ENCODE measurements at regions of chr2 and their contacts with region 1.

Region 1: GRCh38 chr2:134207564-134208209 is 46.2 kb upstream of the MGAT5 start:
- DNase-seq: no peak
- H3K4me3 ChIP-seq: no peak overlapping the region
- CTCF ChIP-seq: peak; percentile 61

Region 2: GRCh38 chr2:134193006-134193405 is 14.7 kb before region 1 on chr2:
- CTCF ChIA-PET with region 1: interaction called, 40 read pairs
- POLR2A ChIA-PET with region 1: no interaction called
- DNase-seq: no peak
- H3K4me3 ChIP-seq: no peak overlapping the region
- CTCF ChIP-seq: no peak

Region 3: GRCh38 chr2:134218930-134219658 is 11.4 kb after region 1 on chr2:
- CTCF ChIA-PET with region 1: interaction called, 168 read pairs
- POLR2A ChIA-PET with region 1: no interaction called
- DNase-seq: no peak
- H3K4me3 ChIP-seq: no peak overlapping the region
- CTCF ChIP-seq: no peak

Region 4: GRCh38 chr2:134254824-134255223 is 47.1 kb after region 1 on chr2:
- CTCF ChIA-PET with region 1: no interaction called
- POLR2A ChIA-PET with region 1: no interaction called
- DNase-seq: no peak
- H3K4me3 ChIP-seq: no peak overlapping the region
- CTCF ChIP-seq: no peak

Region 5: GRCh38 chr2:134310107-134311079 is 102.7 kb after region 1 on chr2:
- CTCF ChIA-PET with region 1: no interaction called
- POLR2A ChIA-PET with region 1: no interaction called
- DNase-seq: no peak
- H3K4me3 ChIP-seq: no peak overlapping the region
- CTCF ChIP-seq: no peak

Region 6: GRCh38 chr2:134692499-134692898 is 484.8 kb after region 1 on chr2:
- CTCF ChIA-PET with region 1: no interaction called
- POLR2A ChIA-PET with region 1: no interaction called
- DNase-seq: no peak
- H3K4me3 ChIP-seq: no peak overlapping the region
- CTCF ChIP-seq: no peak